ENCODE measurements at regions of chr2 and their contacts with region 1.

Region 1: GRCh38 chr2:144876013-144876412 is 356.1 kb upstream of the ZEB2 start:
- DNase-seq: no peak
- H3K4me3 ChIP-seq: no peak overlapping the region
- H3K27ac ChIP-seq: peak overlapping the region; percentile 82
- H3K4me1 ChIP-seq: peaks cover 5% of the 10 kb centered on the region
- H3K27me3 ChIP-seq: no peaks in the 10 kb centered on the region
- CTCF ChIP-seq: no peak

Region 2: GRCh38 chr2:144516981-144517865 is 358.8 kb before region 1 on chr2:
- intact Hi-C with region 1: loop called (anchors 10 kb)
- DNase-seq: peak; percentile 65
- H3K4me3 ChIP-seq: peak overlapping the region; percentile 85
- H3K27ac ChIP-seq: peak overlapping the region; percentile 98
- H3K4me1 ChIP-seq: peaks cover 61% of the 10 kb centered on the region
- H3K27me3 ChIP-seq: peaks cover 6% of the 10 kb centered on the region
- CTCF ChIP-seq: no peak

Region 3: GRCh38 chr2:144959416-144959815 is 83.4 kb after region 1 on chr2:
- intact Hi-C with region 1: no loop called
- DNase-seq: no peak
- H3K4me3 ChIP-seq: no peak overlapping the region
- H3K27ac ChIP-seq: no peak overlapping the region
- H3K4me1 ChIP-seq: no peaks in the 10 kb centered on the region
- H3K27me3 ChIP-seq: no peaks in the 10 kb centered on the region
- CTCF ChIP-seq: no peak

Region 4: DNA sequence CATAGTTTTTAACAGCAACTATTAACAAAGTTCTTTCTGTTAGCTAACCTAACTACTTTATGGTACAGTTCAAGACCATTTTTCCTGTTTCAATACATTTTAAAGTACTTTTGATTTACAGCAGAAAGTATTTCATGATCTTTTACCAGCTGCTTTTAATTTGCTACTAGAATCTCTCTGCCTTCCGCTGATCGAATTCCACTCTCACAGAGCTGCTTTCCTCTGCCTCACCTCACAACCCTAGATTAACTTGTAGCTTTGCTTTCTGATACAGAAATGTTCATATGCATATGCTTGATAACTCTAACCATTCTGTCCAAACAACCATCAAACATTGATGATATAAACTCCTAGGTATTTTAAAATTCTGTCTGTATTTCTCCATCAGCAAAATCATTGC is 107.1 kb after region 1 on chr2:
- intact Hi-C with region 1: no loop called
- DNase-seq: no peak
- H3K4me3 ChIP-seq: no peak overlapping the region
- H3K27ac ChIP-seq: no peak overlapping the region
- H3K4me1 ChIP-seq: no peaks in the 10 kb centered on the region
- H3K27me3 ChIP-seq: no peaks in the 10 kb centered on the region
- CTCF ChIP-seq: no peak

Region 5: DNA sequence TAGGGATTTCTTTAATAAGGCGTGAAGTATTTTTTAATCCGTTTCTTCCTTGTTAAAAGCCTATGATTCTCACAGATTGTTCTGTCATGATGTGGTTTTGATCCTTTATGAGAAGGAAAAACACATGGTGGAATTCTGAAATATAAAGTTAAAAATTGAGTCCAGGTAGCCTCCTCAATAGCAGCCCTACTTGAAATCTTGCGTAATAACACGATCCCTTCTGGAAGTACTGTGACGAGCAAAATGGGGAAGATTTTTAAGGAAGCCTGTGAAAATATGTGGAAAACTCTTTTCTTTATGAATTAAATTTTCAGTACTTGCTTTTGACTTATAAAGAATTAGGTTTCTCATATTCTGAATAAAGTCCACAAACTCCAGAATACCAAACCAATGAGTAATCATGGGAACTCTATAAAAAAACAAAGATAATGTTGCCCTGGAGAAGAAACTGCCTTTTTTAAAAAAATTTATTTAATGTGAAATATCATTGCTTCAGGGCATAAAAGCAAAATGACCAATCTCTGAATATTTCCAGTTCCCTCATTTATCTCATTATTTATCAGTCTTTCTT is 120.3 kb after region 1 on chr2:
- intact Hi-C with region 1: loop called (anchors 5 kb)
- DNase-seq: no peak
- H3K4me3 ChIP-seq: no peak overlapping the region
- H3K27ac ChIP-seq: peak overlapping the region; percentile 79
- H3K4me1 ChIP-seq: no peaks in the 10 kb centered on the region
- H3K27me3 ChIP-seq: no peaks in the 10 kb centered on the region
- CTCF ChIP-seq: no peak

Region 6: GRCh38 chr2:145090841-145091761 is 215.1 kb after region 1 on chr2:
- intact Hi-C with region 1: no loop called
- DNase-seq: no peak
- H3K4me3 ChIP-seq: no peak overlapping the region
- H3K27ac ChIP-seq: peak overlapping the region; percentile 13
- H3K4me1 ChIP-seq: peaks cover under 1% of the 10 kb centered on the region
- H3K27me3 ChIP-seq: no peaks in the 10 kb centered on the region
- CTCF ChIP-seq: no peak

Measured in left ventricle myocardium inferior (tissue), 1 donor.